GM10248 (cell line): ENCODE measurements at regions of chr13 and their contacts with region 1.

Region 1: DNA sequence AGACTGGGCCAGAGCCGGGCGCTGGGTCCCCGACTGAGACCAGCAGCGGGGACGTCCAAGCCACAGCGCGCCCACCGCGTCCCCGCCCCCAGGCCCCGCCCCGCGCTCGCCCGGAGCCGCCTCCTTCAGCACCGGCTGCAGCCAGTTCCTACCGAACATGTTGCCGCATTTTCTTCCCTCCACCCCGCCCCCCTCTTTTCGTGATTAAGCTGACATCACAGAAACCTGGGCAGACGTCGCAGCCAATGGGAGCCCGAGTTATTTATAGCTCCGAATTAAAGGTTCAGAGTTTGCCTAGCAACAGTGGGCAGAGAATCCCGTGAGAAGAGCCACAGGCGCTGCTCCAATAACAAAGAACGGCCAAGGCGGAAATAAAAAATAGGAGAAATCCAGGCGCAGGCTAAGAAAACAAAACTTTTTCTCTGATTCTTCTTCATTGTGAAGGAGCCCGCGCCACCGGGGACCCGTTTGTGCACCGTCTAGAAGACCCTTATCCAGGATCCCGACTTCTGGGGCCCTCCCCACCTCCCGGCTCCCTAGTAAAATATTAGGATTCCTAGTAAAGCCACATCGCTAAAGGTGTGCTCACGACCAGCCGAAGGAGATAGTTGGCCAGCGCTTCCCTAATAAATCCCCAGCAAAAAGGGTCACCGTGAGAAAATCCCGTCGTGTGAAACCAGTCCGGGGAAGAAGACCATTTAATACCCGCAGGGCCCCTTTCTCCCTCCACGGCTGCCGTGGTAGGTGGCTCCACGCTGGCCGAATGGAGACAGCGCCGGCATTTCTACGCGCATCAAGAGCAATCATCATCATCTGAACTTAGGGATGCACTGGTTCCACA is 61.7 kb downstream of the SERP2 start:
- DNase-seq: peak; percentile 81
- CTCF ChIP-seq: no peak

Region 2: GRCh38 chr13:43905435-43906031 is 529.8 kb before region 1 on chr13:
- CTCF ChIA-PET with region 1: interaction called, 48 read pairs
- POLR2A ChIA-PET with region 1: no interaction called
- DNase-seq: peak; percentile 48
- CTCF ChIP-seq: peak; percentile 81

Region 3: DNA sequence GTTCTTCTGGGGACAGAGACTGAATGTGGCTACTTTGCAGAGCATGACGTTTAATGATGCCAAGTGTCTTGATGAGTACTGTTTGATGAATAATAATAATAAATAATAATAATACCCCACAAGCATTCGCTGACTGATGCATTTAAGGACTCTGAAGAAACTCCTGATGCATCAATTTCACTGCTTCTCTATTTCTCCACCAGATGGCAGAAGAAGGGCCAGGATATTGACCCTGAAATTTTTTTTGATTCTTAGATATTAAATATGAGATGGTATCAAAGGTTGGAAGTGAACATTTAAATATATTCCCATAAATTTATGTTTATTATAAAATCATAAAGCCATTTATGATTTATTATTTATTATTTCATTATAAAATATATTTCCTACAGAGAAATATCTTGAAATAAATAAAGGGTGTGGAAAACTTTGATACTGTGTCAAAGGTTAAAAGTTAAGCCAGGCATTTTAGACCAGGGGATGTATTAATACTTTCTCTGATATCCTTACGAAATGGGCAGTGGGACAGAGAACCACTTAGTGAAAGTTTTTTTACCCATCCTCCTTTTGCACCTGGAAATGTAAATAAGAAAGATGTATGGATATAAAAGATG is 384.8 kb before region 1 on chr13:
- CTCF ChIA-PET with region 1: interaction called, 11 read pairs
- POLR2A ChIA-PET with region 1: no interaction called
- DNase-seq: peak; percentile 20
- CTCF ChIP-seq: peak; percentile 46

Region 4: DNA sequence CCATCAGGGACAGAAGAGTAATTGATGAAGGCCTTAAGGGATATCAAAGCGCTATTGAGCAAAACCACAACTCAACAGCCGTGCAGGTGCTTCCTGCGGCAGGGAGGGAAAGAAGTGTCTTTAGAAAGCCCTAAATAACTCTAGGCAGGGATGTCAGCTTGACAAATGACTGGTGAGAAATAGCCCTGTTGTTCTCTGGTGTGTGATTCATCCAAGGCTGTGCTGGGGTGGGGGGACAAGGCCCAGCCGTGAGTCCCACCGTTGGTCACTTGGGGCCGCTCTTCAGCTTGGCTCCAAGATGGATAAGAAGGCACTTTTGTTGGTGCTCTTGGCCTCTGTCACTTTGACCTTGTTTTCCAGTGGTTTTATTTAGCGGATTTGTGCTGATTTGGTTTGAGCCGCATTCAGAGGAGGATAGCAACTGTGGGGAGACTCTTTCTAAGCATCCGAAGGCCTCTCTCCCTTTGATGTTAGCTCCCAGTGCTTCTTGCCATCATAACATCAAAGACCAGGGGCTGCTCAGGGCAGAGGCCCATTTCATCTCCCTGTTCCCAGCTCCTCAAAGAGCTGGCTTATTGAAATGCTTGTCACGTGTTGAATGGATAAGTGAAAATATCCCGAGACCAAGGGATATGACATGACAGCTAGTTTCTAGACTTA is 192.0 kb before region 1 on chr13:
- CTCF ChIA-PET with region 1: interaction called, 13 read pairs
- POLR2A ChIA-PET with region 1: no interaction called
- DNase-seq: peak; percentile 45
- CTCF ChIP-seq: peak; percentile 30

Region 5: DNA sequence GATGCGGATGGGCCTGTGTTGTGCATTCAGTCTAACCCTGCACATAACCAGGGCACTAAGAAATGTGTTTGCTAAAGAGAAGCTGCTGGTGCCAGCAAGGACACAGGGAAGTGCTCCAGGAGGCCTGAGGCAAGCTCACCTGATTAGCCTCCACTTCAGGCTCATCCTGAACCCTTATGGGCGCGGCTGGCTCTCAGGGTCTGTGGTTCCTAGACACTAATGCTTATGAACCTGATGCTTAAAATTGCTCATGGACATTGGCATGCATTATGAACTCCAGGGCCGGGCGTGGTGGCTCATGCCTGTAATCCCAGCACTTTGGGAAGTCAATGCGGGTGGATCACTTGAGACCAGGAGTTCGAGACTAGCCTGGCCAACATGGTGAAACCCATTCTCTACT is 27.5 kb before region 1 on chr13:
- CTCF ChIA-PET with region 1: no interaction called
- POLR2A ChIA-PET with region 1: no interaction called
- DNase-seq: no peak
- CTCF ChIP-seq: no peak